Endothelial cell of umbilical vein (primary cell): ENCODE measurements at regions of chr11 and their contacts with region 1.

Region 1: GRCh38 chr11:66126808-66127555 is 56.9 kb downstream of the PACS1 start:
- DNase-seq: peak; percentile 76
- H3K4me3 ChIP-seq: no peak overlapping the region
- H3K27ac ChIP-seq: peak overlapping the region; percentile 58
- H3K4me1 ChIP-seq: peaks cover 17% of the 10 kb centered on the region
- H3K27me3 ChIP-seq: no peaks in the 10 kb centered on the region
- CTCF ChIP-seq: no peak
- POLR2A ChIP-seq: no peak

Region 2: GRCh38 chr11:66112601-66113098 is 14.3 kb before region 1 on chr11:
- CTCF ChIA-PET with region 1: interaction called, 25 read pairs
- POLR2A ChIA-PET with region 1: no interaction called
- dilution Hi-C with region 1: no loop called
- intact Hi-C with region 1: no loop called
- DNase-seq: peak; percentile 87
- H3K4me3 ChIP-seq: no peak overlapping the region
- H3K27ac ChIP-seq: peak overlapping the region; percentile 54
- H3K4me1 ChIP-seq: peaks cover 47% of the 10 kb centered on the region
- H3K27me3 ChIP-seq: no peaks in the 10 kb centered on the region
- CTCF ChIP-seq: no peak
- POLR2A ChIP-seq: no peak